B cell (primary cell): ENCODE measurements at regions of chr15 and their contacts with region 1.

Region 1: DNA sequence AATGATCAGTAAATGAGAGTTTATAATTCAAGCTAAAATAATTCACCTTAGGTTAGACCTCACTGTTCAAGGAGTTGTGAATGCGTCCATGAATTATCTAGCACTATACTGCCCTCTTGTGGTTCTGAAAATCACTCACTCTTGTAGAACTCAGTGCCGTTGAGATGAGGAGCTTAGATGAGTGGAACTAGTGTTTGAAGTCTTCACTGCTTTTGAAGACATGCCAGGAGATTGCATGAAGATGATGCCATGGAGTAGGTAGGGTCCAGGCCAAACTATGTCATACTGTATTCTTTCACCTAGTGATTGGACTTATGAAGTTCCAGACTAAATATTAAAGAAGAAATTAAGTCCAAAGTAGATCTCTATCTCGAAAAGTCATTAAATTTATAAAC is 28.8 kb downstream of the LYSMD4 start:
- DNase-seq: peak; percentile 87
- ATAC-seq: peak; percentile 80
- H3K4me3 ChIP-seq: no peak overlapping the region
- H3K4me3 Mint-ChIP-seq: no peak overlapping the region
- H3K27ac ChIP-seq: peak overlapping the region in 1 of 2 donors; percentile 91
- H3K27ac Mint-ChIP-seq: no peak overlapping the region
- H3K4me1 ChIP-seq: peaks cover 15 to 18% of the 10 kb centered on the region in 2 donors
- H3K4me1 Mint-ChIP-seq: peaks cover 28% of the 10 kb centered on the region
- H3K27me3 ChIP-seq: no peaks in the 10 kb centered on the region
- H3K27me3 Mint-ChIP-seq: no peaks in the 10 kb centered on the region
- CTCF ChIP-seq: peak; percentile 76

Region 2: DNA sequence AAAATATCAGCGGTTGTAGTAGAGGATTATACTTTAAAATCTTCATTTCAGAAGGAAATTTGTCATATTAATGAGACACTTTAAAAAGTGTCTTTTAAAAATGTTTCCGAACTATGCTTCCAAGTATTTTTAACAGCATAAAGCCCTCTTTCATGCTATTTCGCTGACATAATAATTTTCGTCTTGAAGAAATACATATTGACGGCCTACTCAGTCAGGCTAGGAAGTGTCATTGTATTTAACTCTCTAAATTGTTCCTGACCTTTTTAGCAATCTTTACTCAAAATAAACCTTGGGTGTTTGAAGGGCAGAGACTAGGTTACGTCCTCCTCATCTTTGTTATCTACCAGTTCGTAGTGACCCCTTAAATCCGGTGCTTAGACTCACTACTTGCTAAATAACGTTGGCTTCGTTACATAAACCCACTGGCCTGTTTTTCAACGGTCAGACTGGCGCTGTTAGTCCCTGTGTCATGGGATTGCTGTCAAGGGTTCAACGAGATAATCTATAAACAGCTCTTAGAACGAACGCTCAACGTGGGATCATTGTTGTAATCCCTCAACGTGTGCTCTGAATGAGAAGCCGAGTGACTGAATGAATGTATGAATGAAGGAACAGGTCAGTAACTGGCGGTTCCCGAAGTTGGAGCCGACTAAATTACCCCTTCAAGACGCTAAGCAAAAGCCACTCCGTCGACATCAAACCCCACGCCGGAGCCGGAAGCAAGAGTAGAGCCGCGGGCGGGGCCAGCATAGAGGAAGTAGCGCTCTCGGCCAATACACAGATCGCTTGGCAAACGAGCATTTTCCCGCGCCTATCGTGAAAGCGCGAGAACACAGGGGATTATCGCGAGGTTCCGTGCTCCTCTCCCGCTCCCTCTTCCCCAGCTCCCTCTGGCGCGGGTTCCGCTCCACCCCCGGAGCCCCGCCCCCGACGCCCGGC is 453.7 kb before region 1 on chr15:
- CTCF ChIA-PET with region 1: interaction called, 10 read pairs
- POLR2A ChIA-PET with region 1: no interaction called
- intact Hi-C with region 1: no loop called
- DNase-seq: peak; percentile 97
- ATAC-seq: peak; percentile 97
- H3K4me3 ChIP-seq: peak overlapping the region; percentile 61 to 91 (median 81)
- H3K4me3 Mint-ChIP-seq: peak overlapping the region; percentile 96
- H3K27ac ChIP-seq: peak overlapping the region; percentile 70 to 81
- H3K27ac Mint-ChIP-seq: peak overlapping the region; percentile 92
- H3K4me1 ChIP-seq: peaks cover 18 to 30% of the 10 kb centered on the region in 2 donors
- H3K4me1 Mint-ChIP-seq: peaks cover 31% of the 10 kb centered on the region
- H3K27me3 ChIP-seq: no peaks in the 10 kb centered on the region
- H3K27me3 Mint-ChIP-seq: no peaks in the 10 kb centered on the region
- CTCF ChIP-seq: no peak

Region 3: GRCh38 chr15:99343881-99344551 is 360.4 kb before region 1 on chr15:
- CTCF ChIA-PET with region 1: interaction called, 86 read pairs
- POLR2A ChIA-PET with region 1: no interaction called
- intact Hi-C with region 1: loop called (anchors 1 kb)
- DNase-seq: peak; percentile 51
- ATAC-seq: peak; percentile 69
- H3K4me3 ChIP-seq: no peak overlapping the region
- H3K4me3 Mint-ChIP-seq: no peak overlapping the region
- H3K27ac ChIP-seq: no peak overlapping the region
- H3K27ac Mint-ChIP-seq: no peak overlapping the region
- H3K4me1 ChIP-seq: peaks cover 20 to 22% of the 10 kb centered on the region in 2 donors
- H3K4me1 Mint-ChIP-seq: peaks cover 26% of the 10 kb centered on the region
- H3K27me3 ChIP-seq: no peaks in the 10 kb centered on the region
- H3K27me3 Mint-ChIP-seq: no peaks in the 10 kb centered on the region
- CTCF ChIP-seq: peak; percentile 49

Region 4: GRCh38 chr15:99476413-99477222 is 227.8 kb before region 1 on chr15:
- CTCF ChIA-PET with region 1: interaction called, 20 read pairs
- POLR2A ChIA-PET with region 1: no interaction called
- intact Hi-C with region 1: no loop called
- DNase-seq: peak; percentile 78
- ATAC-seq: peak; percentile 83
- H3K4me3 ChIP-seq: no peak overlapping the region
- H3K4me3 Mint-ChIP-seq: peak overlapping the region; percentile 77
- H3K27ac ChIP-seq: no peak overlapping the region
- H3K27ac Mint-ChIP-seq: peak overlapping the region; percentile 78
- H3K4me1 ChIP-seq: peaks cover 45 to 52% of the 10 kb centered on the region in 2 donors
- H3K4me1 Mint-ChIP-seq: peaks cover 59% of the 10 kb centered on the region
- H3K27me3 ChIP-seq: no peaks in the 10 kb centered on the region
- H3K27me3 Mint-ChIP-seq: no peaks in the 10 kb centered on the region
- CTCF ChIP-seq: no peak

Region 5: DNA sequence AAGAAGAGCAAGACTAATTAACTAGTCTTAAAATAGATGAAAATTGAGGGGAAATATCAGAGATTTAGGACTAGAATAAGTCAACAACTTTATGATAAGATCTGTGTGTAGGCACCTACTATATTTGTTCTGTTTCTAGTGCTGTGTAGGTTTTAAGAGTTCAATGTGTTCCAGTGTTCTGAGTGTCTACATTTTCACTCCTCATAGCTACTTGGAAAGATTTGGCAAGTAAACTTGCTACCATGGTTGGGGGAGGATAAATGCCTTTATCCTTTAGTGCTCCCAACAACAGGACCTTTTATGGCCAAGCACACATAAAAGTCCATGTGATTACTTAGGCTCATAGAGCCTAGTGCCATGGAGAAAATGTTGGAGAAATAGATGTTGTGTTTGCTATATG is 35.2 kb before region 1 on chr15:
- CTCF ChIA-PET with region 1: interaction called, 14 read pairs
- POLR2A ChIA-PET with region 1: no interaction called
- intact Hi-C with region 1: no loop called
- DNase-seq: no peak
- ATAC-seq: no peak
- H3K4me3 ChIP-seq: no peak overlapping the region
- H3K4me3 Mint-ChIP-seq: no peak overlapping the region
- H3K27ac ChIP-seq: peak overlapping the region in 1 of 2 donors; percentile 2
- H3K27ac Mint-ChIP-seq: no peak overlapping the region
- H3K4me1 ChIP-seq: no peaks in the 10 kb centered on the region
- H3K4me1 Mint-ChIP-seq: peaks cover 1% of the 10 kb centered on the region
- H3K27me3 ChIP-seq: no peaks in the 10 kb centered on the region
- H3K27me3 Mint-ChIP-seq: no peaks in the 10 kb centered on the region
- CTCF ChIP-seq: no peak

Region 6: DNA sequence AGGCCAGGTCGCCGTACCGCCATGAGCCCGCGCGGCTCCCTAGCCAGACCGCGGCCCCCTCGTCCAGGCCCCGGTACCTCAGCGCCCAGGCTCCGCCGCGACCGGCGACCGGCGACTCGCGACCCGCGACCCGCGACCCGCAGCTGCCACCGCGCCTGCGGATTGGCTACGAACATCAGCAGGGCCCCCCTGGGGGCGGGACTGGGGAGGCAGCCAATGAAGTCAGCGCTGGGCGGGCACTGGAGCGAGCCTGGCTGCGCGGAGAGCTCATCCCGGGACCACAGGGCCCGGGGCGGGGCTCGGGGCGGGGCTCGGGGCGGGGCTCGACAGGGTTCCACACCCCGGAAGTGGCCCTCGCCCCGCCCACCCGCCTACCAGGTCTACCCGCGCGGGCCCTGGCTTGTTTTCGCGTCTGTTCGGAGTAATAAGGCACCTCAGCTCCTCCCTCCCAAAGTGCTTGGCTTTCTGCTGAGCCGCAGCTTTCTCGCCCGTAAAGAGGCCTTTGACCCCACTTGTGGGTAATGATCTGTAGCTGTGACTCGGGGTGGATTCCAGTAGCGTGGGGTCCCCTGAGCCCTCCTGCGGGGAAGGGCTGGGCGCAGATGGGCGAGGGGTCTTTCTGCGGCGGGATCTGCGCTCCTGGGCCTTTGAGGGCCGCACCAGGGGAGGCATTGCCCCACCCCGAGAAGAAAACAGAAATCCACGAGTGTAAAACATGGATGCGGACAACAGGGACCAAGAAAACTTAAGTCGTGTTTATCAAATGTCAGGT is 29.0 kb after region 1 on chr15 and contains the start of gene LYSMD4:
- CTCF ChIA-PET with region 1: interaction called, 33 read pairs
- POLR2A ChIA-PET with region 1: interaction called, 6 read pairs
- intact Hi-C with region 1: loop called (anchors 2 kb)
- DNase-seq: peak; percentile 96
- ATAC-seq: peak; percentile 100
- H3K4me3 ChIP-seq: peak within 1 kb of the TSS; percentile 12 to 89 (median 77)
- H3K4me3 Mint-ChIP-seq: peak within 1 kb of the TSS; percentile 90
- H3K27ac ChIP-seq: peak within 1 kb of the TSS; percentile 70 to 77
- H3K27ac Mint-ChIP-seq: peak within 1 kb of the TSS; percentile 90
- H3K4me1 ChIP-seq: peaks cover 10 to 13% of the 10 kb centered on the region in 2 donors
- H3K4me1 Mint-ChIP-seq: peaks cover 14% of the 10 kb centered on the region
- H3K27me3 ChIP-seq: no peaks in the 10 kb centered on the region
- H3K27me3 Mint-ChIP-seq: no peaks in the 10 kb centered on the region
- CTCF ChIP-seq: no peak
- total RNA-seq, gene LYSMD4: 8.6 and 9.7 TPM in 2 replicates